Heart left ventricle (tissue), 16 donors: ENCODE measurements at regions of chr4 and their contacts with region 1.

Region 1: GRCh38 chr4:181643466-181643865 is 599.7 kb upstream of the TENM3 start:
- DNase-seq: no peak
- ATAC-seq: no peak
- H3K4me3 ChIP-seq: no peak overlapping the region
- H3K27ac ChIP-seq: no peak overlapping the region
- H3K4me1 ChIP-seq: no peaks in the 10 kb centered on the region
- H3K27me3 ChIP-seq: peaks cover 0 to 3% (median 0%) of the 10 kb centered on the region in 9 donors
- CTCF ChIP-seq: no peak
- POLR2A ChIP-seq: no peak

Region 2: DNA sequence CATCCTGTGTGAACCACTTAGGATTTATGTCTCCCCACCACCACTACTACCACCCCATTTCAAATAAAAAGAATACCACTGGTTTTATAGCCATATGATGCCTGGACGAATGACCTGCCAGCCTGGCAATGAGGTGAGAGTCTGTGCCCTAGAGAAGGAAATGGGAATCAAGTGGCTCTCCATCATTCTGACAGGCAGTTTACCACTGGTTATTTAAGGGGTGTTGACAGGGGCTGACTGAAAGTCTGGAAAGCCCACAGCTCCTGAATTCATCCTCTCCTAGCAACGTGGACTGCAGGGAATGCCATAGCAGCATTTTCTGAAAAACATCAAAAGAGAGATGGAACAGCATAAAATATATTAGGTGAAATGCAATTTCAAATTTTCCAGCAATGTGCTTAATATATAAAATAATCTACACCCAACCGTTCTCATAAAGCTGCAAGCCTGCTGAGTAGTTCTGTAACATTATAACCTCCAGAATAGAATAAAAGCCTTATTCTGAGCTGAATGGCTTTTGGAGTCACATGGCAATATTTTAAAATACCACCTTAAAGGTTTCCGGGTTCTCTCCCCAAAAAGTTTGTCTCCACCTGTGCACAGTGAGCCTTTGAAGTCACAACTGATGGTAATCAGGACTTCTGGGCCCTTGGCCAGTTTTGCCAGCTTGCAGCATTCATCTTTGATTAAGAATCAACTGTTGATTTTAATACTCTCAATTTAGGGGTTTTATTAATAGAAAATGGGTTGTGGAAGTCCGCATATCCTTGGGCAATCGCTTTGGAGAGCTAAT is 1152.2 kb after region 1 on chr4:
- intact Hi-C with region 1: loop called in 1 of 10 experiments (anchors 5 kb)
- DNase-seq: no peak
- ATAC-seq: no peak
- H3K4me3 ChIP-seq: no peak overlapping the region
- H3K27ac ChIP-seq: no peak overlapping the region
- H3K4me1 ChIP-seq: no peaks in the 10 kb centered on the region
- H3K27me3 ChIP-seq: no peaks in the 10 kb centered on the region
- CTCF ChIP-seq: no peak
- POLR2A ChIP-seq: no peak